Prostate gland (tissue), 2 donors: ENCODE measurements at regions of chr2 and their contacts with region 1.

Region 1: DNA sequence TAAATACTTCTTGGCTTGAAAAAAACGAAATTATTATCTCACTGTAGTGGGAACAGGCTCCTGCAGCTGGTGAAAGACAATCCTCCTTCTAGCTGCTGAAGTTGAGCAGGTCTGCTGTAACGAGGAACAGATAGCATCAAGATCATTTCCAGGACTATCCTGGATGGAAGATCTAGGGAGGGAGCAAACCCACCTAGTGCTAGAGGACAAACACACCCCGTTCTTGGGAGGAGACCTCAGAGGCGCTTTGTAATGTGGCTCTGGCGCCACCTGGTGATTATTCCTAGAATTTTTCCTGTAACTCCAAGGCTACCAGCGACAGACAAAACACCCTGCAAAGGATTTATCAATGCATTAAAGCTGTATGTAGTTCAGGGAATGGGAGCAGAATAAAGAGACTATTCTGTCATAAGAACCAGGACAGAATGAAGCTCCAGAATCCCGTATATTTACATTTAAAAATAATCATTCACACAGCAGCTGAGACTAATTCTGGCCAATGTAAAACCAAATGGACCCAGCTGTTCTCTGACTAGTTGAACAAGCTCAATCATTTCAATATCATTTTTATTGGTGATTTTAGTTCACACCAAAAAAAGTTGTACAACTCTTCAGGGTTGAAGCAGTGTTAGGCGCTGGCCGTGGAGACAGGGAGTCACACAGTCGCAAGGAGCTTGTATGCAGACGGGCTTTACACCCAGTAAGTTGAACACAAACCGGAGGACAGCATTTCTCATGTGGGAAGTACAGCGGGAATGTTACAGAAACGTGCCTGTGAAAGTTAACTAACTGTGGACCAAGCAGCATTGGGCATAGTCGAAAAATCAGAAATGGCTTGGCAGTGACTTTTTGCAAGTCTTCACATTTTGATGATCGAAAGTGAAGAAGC is 290.3 kb downstream of the TRIB2 start:
- DNase-seq: peak; percentile 58
- H3K4me3 ChIP-seq: no peak overlapping the region
- H3K27ac ChIP-seq: no peak overlapping the region
- H3K4me1 ChIP-seq: no peaks in the 10 kb centered on the region
- H3K27me3 ChIP-seq: no peaks in the 10 kb centered on the region
- CTCF ChIP-seq: peak; percentile 56 to 84 (median 78)
- POLR2A ChIP-seq: no peak

Region 2: DNA sequence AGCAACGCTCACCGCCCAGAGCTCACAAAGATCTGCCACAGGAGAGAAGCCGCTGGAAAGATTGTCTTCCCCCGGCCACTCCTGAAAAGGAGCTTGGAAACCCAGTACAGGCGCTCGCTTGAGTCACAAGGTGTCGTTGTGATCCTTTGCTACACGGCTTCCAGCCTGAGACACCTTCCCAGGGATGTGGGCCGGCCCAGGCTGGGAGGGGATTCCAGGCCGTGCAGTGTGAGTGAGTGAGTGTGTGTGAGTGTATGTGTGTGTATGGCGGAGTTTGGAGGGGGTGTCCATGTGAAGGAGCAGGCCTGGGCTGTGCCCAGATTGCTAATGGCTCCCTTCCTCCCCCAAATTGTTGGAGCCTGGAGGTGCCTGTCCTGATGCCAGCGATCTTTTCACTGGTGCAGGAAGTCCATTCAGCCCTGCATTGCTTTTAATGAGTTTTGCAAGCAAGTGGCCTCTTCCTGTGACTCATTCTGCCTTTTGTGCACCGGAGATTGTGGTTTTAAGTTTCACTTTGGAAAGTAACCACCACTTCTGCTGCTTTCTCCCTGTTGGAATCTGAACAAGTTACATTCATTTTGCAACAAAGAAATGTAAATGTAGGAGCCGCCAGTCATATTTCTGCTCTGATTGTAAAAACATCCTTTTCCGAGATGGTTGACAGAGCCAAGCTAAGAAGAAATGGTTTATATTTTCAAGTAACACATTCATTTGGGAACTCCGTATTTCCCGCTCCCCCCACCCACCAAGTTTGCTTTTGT is 1176.9 kb before region 1 on chr2:
- intact Hi-C with region 1: loop called (anchors 2 kb)
- DNase-seq: peak; percentile 79
- H3K4me3 ChIP-seq: peak overlapping the region; percentile 5 to 17
- H3K27ac ChIP-seq: peak overlapping the region; percentile 54 to 67
- H3K4me1 ChIP-seq: peaks cover 6% of the 10 kb centered on the region
- H3K27me3 ChIP-seq: no peaks in the 10 kb centered on the region
- CTCF ChIP-seq: peak in 2 of 4 experiments; percentile 45 to 49
- POLR2A ChIP-seq: no peak

Region 3: DNA sequence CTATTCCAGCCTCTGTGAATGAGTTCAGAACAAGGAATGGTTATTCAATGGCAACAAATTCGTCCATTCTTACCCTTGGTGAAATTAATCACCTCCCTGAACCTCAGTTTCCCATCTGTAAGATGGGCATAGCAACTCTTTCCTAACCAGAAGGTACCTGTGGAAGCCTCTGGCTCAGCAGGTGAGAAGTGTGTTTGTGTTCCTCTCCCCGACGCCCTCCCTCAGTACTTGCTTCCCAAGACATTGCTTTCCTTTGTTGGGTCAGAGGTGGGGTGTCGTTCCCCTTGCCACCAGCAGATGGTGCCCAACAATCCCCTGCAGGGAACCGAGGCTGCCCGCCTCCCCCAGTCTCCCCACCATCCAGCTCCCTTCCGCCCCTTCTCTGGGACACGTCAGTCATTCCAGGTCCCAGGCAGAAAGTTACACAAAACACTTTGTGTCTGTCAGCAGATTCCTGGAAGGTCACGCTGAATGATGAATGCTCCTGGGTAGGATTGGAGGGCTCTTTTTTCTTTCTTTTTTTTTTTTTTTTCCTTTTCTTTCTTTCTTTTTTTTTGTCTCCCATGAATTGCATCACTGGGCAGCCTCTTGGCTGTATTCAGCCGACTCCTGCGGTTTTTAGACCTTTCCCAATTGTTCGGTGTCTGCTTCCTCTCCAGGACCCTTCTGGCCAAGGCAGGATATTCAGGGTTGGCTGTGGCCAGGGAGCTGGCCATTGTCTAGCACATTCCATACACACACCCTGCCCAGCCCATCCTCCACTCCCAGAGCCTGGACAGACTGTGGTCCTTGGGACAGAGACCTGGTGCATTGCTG is 1143.4 kb before region 1 on chr2:
- intact Hi-C with region 1: loop called (anchors 2 kb)
- DNase-seq: peak; percentile 81
- H3K4me3 ChIP-seq: no peak overlapping the region
- H3K27ac ChIP-seq: no peak overlapping the region
- H3K4me1 ChIP-seq: no peaks in the 10 kb centered on the region
- H3K27me3 ChIP-seq: no peaks in the 10 kb centered on the region
- CTCF ChIP-seq: peak; percentile 91 to 95 (median 94)
- POLR2A ChIP-seq: no peak

Region 4: GRCh38 chr2:12192762-12193161 is 814.3 kb before region 1 on chr2:
- intact Hi-C with region 1: no loop called
- DNase-seq: no peak
- H3K4me3 ChIP-seq: no peak overlapping the region
- H3K27ac ChIP-seq: no peak overlapping the region
- H3K4me1 ChIP-seq: no peaks in the 10 kb centered on the region
- H3K27me3 ChIP-seq: no peaks in the 10 kb centered on the region
- CTCF ChIP-seq: no peak
- POLR2A ChIP-seq: no peak

Region 5: GRCh38 chr2:13046557-13047165 is 39.6 kb after region 1 on chr2:
- intact Hi-C with region 1: no loop called
- DNase-seq: no peak
- H3K4me3 ChIP-seq: no peak overlapping the region
- H3K27ac ChIP-seq: no peak overlapping the region
- H3K4me1 ChIP-seq: no peaks in the 10 kb centered on the region
- H3K27me3 ChIP-seq: no peaks in the 10 kb centered on the region
- CTCF ChIP-seq: peak in 2 of 4 experiments; percentile 12 to 19
- POLR2A ChIP-seq: no peak